Endothelial cell of umbilical vein (primary cell): ENCODE measurements at regions of chr6 and their contacts with region 1.

Region 1: DNA sequence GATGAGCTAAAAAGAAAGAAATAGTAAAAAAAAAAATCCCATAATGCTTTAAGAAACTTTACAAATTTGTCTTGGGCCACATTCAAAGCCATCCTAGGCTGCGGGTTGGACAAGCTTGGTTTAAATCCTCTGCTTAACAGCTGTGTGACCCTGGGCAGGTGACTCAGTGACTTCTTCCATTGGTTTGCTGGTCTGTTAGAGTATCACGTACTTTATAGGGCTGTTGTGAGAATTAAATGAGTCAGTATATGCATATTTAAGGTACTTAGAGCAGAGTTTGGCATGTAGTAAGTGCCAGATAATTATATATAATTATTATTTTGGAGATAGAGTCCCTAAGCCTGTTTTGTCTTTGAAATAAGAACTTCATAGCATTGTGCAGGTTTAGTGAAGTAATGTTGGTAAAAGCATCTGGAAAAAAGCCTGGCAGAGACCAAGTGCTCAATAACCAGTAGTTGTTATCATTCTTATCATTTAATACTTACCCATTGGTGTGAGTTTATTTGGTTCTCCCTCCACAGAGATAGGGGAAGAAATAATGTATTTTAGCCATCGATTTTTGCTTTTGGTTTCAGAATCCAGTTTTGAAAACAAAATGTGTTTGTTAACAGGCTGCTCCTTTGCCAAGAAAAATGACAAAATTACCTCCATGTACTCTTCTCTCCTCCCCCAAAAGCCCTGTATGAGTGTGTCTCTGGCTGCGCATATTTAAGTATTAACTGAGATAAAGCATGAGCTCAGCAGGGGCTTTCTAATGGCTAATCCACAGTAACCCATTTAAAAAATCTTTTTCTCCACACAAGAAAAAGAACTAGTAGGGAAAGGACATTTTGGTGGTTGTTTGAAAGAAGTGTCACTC is 67.2 kb downstream of the FOXO3 start:
- DNase-seq: no peak
- H3K4me3 ChIP-seq: no peak overlapping the region
- H3K27ac ChIP-seq: no peak overlapping the region
- H3K4me1 ChIP-seq: peaks cover 3% of the 10 kb centered on the region
- H3K27me3 ChIP-seq: no peaks in the 10 kb centered on the region
- CTCF ChIP-seq: no peak
- POLR2A ChIP-seq: no peak

Region 2: GRCh38 chr6:108644252-108644651 is 16.3 kb after region 1 on chr6:
- CTCF ChIA-PET with region 1: interaction called, 3 read pairs
- POLR2A ChIA-PET with region 1: interaction called, 3 read pairs
- dilution Hi-C with region 1: no loop called
- intact Hi-C with region 1: loop called (anchors 2 kb)
- DNase-seq: no peak
- H3K4me3 ChIP-seq: no peak overlapping the region
- H3K27ac ChIP-seq: no peak overlapping the region
- H3K4me1 ChIP-seq: no peaks in the 10 kb centered on the region
- H3K27me3 ChIP-seq: no peaks in the 10 kb centered on the region
- CTCF ChIP-seq: no peak
- POLR2A ChIP-seq: no peak

Region 3: GRCh38 chr6:108921547-108922361 is 293.8 kb after region 1 on chr6:
- CTCF ChIA-PET with region 1: no interaction called
- POLR2A ChIA-PET with region 1: no interaction called
- dilution Hi-C with region 1: no loop called
- intact Hi-C with region 1: no loop called
- DNase-seq: no peak
- H3K4me3 ChIP-seq: no peak overlapping the region
- H3K27ac ChIP-seq: no peak overlapping the region
- H3K4me1 ChIP-seq: peaks cover 4% of the 10 kb centered on the region
- H3K27me3 ChIP-seq: no peaks in the 10 kb centered on the region
- CTCF ChIP-seq: no peak
- POLR2A ChIP-seq: no peak